ENCODE measurements at regions of chr5 and their contacts with region 1.

Region 1: GRCh38 chr5:112757468-112758208 is 20.0 kb downstream of the APC start:
- DNase-seq: peak; percentile 25
- H3K4me3 ChIP-seq: no peak overlapping the region
- H3K27ac ChIP-seq: no peak overlapping the region
- H3K4me1 ChIP-seq: no peaks in the 10 kb centered on the region
- H3K27me3 ChIP-seq: no peaks in the 10 kb centered on the region
- CTCF ChIP-seq: peak; percentile 30 to 87 (median 77)
- POLR2A ChIP-seq: no peak

Region 2: DNA sequence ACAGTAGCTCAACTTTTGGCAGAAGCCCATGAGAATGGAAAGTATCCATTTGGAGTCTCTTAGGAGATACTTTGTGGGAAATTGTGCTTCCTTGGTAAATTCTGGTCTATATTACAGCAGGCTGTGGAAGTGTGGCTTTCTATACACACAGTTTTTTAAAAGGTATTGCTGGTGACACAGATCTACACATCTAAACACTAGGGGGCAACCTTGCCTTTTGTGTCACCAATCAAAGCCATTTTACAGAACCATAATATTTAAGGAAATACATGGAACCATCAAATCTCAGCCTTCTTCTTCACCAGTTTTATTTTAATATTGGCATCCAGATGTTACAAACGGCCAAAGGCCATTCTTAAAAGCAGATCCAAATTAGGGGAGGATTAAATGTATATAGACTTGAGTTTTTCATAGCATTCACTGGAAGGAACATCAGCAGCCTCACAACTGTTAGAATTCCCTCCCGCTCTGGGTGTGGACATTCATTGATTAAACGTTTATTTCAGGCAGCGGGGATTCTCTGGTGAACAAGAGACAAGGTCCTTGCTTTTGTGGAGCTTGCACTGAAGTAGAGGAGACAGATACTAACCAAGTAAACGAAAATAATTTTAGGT is 206.1 kb before region 1 on chr5:
- intact Hi-C with region 1: loop called (anchors 1 kb)
- DNase-seq: peak; percentile 49
- H3K4me3 ChIP-seq: no peak overlapping the region
- H3K27ac ChIP-seq: no peak overlapping the region
- H3K4me1 ChIP-seq: no peaks in the 10 kb centered on the region
- H3K27me3 ChIP-seq: no peaks in the 10 kb centered on the region
- CTCF ChIP-seq: peak; percentile 64 to 82 (median 76)
- POLR2A ChIP-seq: no peak

Measured in prostate gland (tissue), 2 donors.